PC-9 (cell line): ENCODE measurements at regions of chr19 and their contacts with region 1.

Region 1: GRCh38 chr19:12974301-12975220 is 5.2 kb downstream of the DAND5 start:
- DNase-seq: no peak
- H3K4me3 ChIP-seq: no peak overlapping the region
- H3K27ac ChIP-seq: no peak overlapping the region
- H3K4me1 ChIP-seq: no peaks in the 10 kb centered on the region
- H3K27me3 ChIP-seq: no peaks in the 10 kb centered on the region
- CTCF ChIP-seq: no peak

Region 2: GRCh38 chr19:12873891-12874745 is 100.4 kb before region 1 on chr19:
- CTCF ChIA-PET with region 1: no interaction called
- POLR2A ChIA-PET with region 1: no interaction called
- intact Hi-C with region 1: no loop called
- DNase-seq: no peak
- H3K4me3 ChIP-seq: no peak overlapping the region
- H3K27ac ChIP-seq: no peak overlapping the region
- H3K4me1 ChIP-seq: no peaks in the 10 kb centered on the region
- H3K27me3 ChIP-seq: no peaks in the 10 kb centered on the region
- CTCF ChIP-seq: no peak

Region 3: DNA sequence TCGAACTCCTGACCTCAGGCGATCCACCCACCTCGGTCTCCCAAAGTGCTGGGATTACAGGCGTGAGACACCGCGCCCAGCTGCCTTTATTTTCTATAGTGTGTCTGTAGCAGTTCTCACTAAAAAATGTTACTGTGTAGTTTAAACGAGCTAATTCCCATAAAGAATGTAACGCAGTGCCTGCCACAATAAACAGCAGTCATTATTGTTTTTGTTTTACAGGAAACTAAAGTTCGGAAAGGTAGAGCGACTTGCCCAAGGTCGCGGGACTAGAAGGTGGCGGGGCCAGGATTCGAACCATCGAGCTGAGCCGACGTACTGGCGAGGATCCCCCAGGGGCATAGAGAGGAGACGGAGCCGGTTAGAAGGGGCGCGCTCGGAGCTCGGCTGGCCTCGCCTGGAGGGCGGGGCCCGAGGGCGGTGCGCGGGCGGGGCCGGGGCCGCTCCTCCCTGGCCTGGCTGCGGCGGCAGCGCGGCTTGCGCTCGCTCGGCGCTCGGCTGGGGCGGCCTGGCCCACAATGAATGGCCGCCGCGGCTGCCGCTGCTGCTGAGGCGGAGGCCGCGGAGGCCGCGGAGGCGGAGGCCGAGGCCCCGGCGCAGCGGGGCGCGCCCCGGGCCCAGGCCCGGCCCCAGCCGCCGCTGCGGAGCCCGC is 143.3 kb after region 1 on chr19 and contains the start of gene NACC1:
- CTCF ChIA-PET with region 1: interaction called, 14 read pairs
- POLR2A ChIA-PET with region 1: no interaction called
- intact Hi-C with region 1: no loop called
- DNase-seq: peak; percentile 72 to 92
- H3K4me3 ChIP-seq: peak within 1 kb of the TSS; percentile 99
- H3K27ac ChIP-seq: peak within 1 kb of the TSS; percentile 77
- H3K4me1 ChIP-seq: peaks cover 29% of the 10 kb centered on the region
- H3K27me3 ChIP-seq: no peaks in the 10 kb centered on the region
- CTCF ChIP-seq: no peak
- total RNA-seq, gene NACC1: 101 and 133 TPM in 2 replicates

Region 4: GRCh38 chr19:13132471-13133180 is 158.1 kb after region 1 on chr19:
- CTCF ChIA-PET with region 1: interaction called, 13 read pairs
- POLR2A ChIA-PET with region 1: no interaction called
- intact Hi-C with region 1: no loop called
- DNase-seq: peak; percentile 54 to 69
- H3K4me3 ChIP-seq: no peak overlapping the region
- H3K27ac ChIP-seq: peak overlapping the region; percentile 15; the same call in 1 of the 2 replicates
- H3K4me1 ChIP-seq: peaks cover 10% of the 10 kb centered on the region
- H3K27me3 ChIP-seq: no peaks in the 10 kb centered on the region
- CTCF ChIP-seq: no peak

Region 5: GRCh38 chr19:13430790-13431582 is 456.4 kb after region 1 on chr19:
- CTCF ChIA-PET with region 1: no interaction called
- POLR2A ChIA-PET with region 1: no interaction called
- intact Hi-C with region 1: loop called (anchors 5 kb)
- DNase-seq: peak in 1 of 2 experiments; percentile 35
- H3K4me3 ChIP-seq: no peak overlapping the region
- H3K27ac ChIP-seq: no peak overlapping the region
- H3K4me1 ChIP-seq: no peaks in the 10 kb centered on the region
- H3K27me3 ChIP-seq: no peaks in the 10 kb centered on the region
- CTCF ChIP-seq: peak; percentile 81